ENCODE measurements at regions of chr15 and their contacts with region 1.

Region 1: GRCh38 chr15:88638626-88639372 is at the start of gene ISG20:
- DNase-seq: peak; percentile 83 to 100 (median 99)
- ATAC-seq: peak; percentile 84 to 88 (median 86)
- H3K4me3 ChIP-seq: peak within 1 kb of the TSS; percentile 71 to 73
- H3K4me3 Mint-ChIP-seq: peak within 1 kb of the TSS; percentile 81 to 90 (median 83)
- H3K27ac ChIP-seq: peak within 1 kb of the TSS; percentile 98
- H3K27ac Mint-ChIP-seq: peak within 1 kb of the TSS; percentile 93 to 97
- H3K4me1 ChIP-seq: peaks cover 58 to 91% of the 10 kb centered on the region in 2 experiments
- H3K4me1 Mint-ChIP-seq: peaks cover 80 to 88% (median 81%) of the 10 kb centered on the region in 3 donors
- H3K27me3 ChIP-seq: no peaks in the 10 kb centered on the region
- H3K27me3 Mint-ChIP-seq: no peaks in the 10 kb centered on the region
- total RNA-seq, gene ISG20: 141 to 206 (median 153) TPM

Region 2: DNA sequence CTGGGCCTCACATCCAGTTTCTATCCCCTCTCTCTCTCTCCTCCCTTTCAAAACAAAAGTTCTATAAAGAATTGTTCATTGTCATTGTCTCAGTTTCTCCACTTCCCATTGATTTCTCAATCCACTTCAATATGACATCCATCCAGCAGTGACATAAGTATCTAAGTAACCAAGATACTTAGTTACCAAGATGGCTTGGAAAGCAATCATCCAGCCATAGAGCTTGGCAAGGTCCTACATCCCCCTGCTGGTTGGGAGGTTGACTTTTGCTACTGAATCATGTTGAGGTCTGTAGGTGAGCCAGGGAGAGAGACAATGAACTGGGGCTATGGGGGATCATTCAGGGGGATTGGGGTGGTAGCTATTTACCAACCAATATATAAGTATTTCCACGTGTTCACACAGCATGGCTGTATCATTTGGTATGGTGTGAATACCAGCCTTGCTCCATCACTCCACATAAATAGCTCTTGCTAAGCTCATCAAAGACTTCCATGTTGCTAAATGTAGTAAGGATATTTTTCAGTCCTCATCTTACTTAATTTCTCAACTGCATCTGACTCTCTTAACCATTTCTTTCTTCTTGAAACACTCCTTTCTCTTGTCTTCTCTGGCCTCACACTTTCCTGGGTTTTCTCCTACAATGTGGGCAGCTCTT is 323.4 kb before region 1 on chr15:
- CTCF ChIA-PET with region 1: interaction called in 1 of 2 experiments, 13 read pairs
- POLR2A ChIA-PET with region 1: no interaction called
- DNase-seq: no peak
- ATAC-seq: no peak
- H3K4me3 ChIP-seq: no peak overlapping the region
- H3K4me3 Mint-ChIP-seq: no peak overlapping the region
- H3K27ac ChIP-seq: no peak overlapping the region
- H3K27ac Mint-ChIP-seq: no peak overlapping the region
- H3K4me1 ChIP-seq: no peaks in the 10 kb centered on the region
- H3K4me1 Mint-ChIP-seq: no peaks in the 10 kb centered on the region
- H3K27me3 ChIP-seq: peaks cover 0 to 18% of the 10 kb centered on the region in 2 experiments
- H3K27me3 Mint-ChIP-seq: peaks cover 12 to 27% of the 10 kb centered on the region in 2 donors

Region 3: GRCh38 chr15:88620995-88621772 is 17.6 kb before region 1 on chr15 and contains the start of gene AEN:
- CTCF ChIA-PET with region 1: interaction called, 8 to 30 read pairs
- POLR2A ChIA-PET with region 1: interaction called, 10 to 41 read pairs
- DNase-seq: peak; percentile 86 to 97 (median 92)
- ATAC-seq: peak; percentile 86 to 94 (median 91)
- H3K4me3 ChIP-seq: peak within 1 kb of the TSS; percentile 70 to 76
- H3K4me3 Mint-ChIP-seq: peak within 1 kb of the TSS; percentile 86 to 92 (median 89)
- H3K27ac ChIP-seq: peak within 1 kb of the TSS; percentile 91
- H3K27ac Mint-ChIP-seq: peak within 1 kb of the TSS; percentile 91 to 96
- H3K4me1 ChIP-seq: peaks cover 28 to 54% of the 10 kb centered on the region in 2 experiments
- H3K4me1 Mint-ChIP-seq: peaks cover 47 to 49% (median 48%) of the 10 kb centered on the region in 3 donors
- H3K27me3 ChIP-seq: peaks cover 0 to 4% of the 10 kb centered on the region in 2 experiments
- H3K27me3 Mint-ChIP-seq: peaks cover 3 to 5% of the 10 kb centered on the region in 2 donors
- total RNA-seq, gene AEN: 31.1 to 69.2 (median 51.5) TPM

Region 4: DNA sequence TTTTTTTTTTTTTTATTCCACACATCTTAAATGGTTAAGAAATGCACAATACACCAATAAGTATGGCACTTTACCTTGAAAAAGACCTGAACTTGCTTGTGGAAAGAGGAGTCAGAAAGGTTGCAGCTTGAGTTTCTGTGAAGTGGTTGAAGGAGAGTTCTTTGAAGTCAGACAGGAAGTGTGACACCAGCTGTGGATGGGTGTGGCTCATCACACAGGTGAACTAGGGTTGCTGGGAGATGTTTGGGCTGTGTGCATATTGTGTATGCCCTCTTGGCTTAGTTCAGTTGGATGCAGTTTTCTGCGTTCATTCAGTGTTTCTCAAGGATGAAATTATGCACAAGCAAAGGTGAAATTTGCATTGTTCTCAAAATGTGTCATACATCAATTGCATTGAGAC is 11.3 kb before region 1 on chr15:
- CTCF ChIA-PET with region 1: interaction called, 8 to 30 read pairs
- POLR2A ChIA-PET with region 1: interaction called, 10 to 41 read pairs
- DNase-seq: peak in 34 of 35 experiments; percentile 65 to 94 (median 81)
- ATAC-seq: peak; percentile 82 to 90 (median 84)
- H3K4me3 ChIP-seq: peak overlapping the region in 1 of 2 donors; percentile 7
- H3K4me3 Mint-ChIP-seq: peak overlapping the region; percentile 39 to 92 (median 44)
- H3K27ac ChIP-seq: peak overlapping the region; percentile 91
- H3K27ac Mint-ChIP-seq: peak overlapping the region; percentile 97
- H3K4me1 ChIP-seq: peaks cover 77 to 100% of the 10 kb centered on the region in 2 experiments
- H3K4me1 Mint-ChIP-seq: peaks cover 88 to 98% (median 98%) of the 10 kb centered on the region in 3 donors
- H3K27me3 ChIP-seq: no peaks in the 10 kb centered on the region
- H3K27me3 Mint-ChIP-seq: no peaks in the 10 kb centered on the region

Region 5: DNA sequence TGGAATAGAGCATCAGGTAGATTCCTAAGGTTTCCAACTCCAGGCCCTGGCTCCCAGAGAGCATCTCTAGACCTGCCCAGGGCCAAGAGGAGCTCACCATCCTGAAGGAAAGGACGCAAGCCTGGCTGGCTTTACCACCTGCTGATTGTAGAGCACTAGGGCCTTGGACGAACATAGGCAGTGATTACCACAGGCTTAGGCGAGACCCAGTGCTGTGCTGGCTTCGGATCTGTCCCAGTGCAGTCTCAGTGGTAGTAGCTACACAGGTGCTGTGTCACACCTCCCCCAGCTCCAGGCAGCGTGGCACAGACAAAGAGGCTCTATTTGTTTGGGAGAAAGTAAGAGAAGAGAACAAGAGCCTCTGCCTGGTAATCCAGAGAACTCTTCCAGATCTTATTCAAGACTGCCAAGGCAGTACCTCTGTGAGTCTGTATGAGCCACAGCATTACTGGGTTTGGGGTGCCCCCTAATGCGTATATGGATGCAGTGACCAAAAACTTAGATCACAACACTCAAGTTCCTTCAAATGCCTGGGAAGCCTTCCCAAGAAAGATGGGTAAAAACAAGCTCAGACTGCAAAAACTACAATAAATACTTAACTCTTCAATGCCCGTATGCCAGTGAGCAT is 25.5 kb after region 1 on chr15:
- CTCF ChIA-PET with region 1: interaction called in 1 of 2 experiments, 17 read pairs
- POLR2A ChIA-PET with region 1: interaction called in 1 of 2 experiments, 7 read pairs
- DNase-seq: peak in 34 of 35 experiments; percentile 28 to 79 (median 52)
- ATAC-seq: peak; percentile 63 to 95 (median 94)
- H3K4me3 ChIP-seq: no peak overlapping the region
- H3K4me3 Mint-ChIP-seq: no peak overlapping the region
- H3K27ac ChIP-seq: no peak overlapping the region
- H3K27ac Mint-ChIP-seq: peak overlapping the region; percentile 71 to 81
- H3K4me1 ChIP-seq: peaks cover 0 to 20% of the 10 kb centered on the region in 2 experiments
- H3K4me1 Mint-ChIP-seq: peaks cover 32 to 40% (median 36%) of the 10 kb centered on the region in 3 donors
- H3K27me3 ChIP-seq: no peaks in the 10 kb centered on the region
- H3K27me3 Mint-ChIP-seq: peaks cover 8 to 13% of the 10 kb centered on the region in 2 donors

Region 6: DNA sequence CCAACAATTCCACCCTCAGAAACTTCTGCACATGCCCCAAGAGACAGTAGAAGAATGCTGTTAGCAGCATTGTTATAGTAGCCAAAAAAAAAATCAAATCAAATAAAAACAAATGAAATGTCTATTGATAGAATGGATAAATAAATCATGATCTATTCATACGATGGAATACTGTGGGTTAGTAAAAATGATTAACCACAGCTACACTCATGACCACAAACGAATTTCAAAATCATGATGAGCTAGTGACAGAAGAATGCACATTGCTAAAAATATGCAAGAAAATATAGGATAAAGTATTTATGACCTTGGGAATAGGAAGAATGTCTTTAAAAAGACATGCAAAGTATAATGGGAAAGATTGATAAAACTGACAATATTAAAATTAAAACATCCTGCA is 106.9 kb after region 1 on chr15:
- CTCF ChIA-PET with region 1: no interaction called
- POLR2A ChIA-PET with region 1: interaction called in 1 of 2 experiments, 10 read pairs
- DNase-seq: no peak
- ATAC-seq: no peak
- H3K4me3 ChIP-seq: no peak overlapping the region
- H3K4me3 Mint-ChIP-seq: no peak overlapping the region
- H3K27ac ChIP-seq: no peak overlapping the region
- H3K27ac Mint-ChIP-seq: no peak overlapping the region
- H3K4me1 ChIP-seq: no peaks in the 10 kb centered on the region
- H3K4me1 Mint-ChIP-seq: no peaks in the 10 kb centered on the region
- H3K27me3 ChIP-seq: peaks cover 2 to 17% of the 10 kb centered on the region in 2 experiments
- H3K27me3 Mint-ChIP-seq: peaks cover 33 to 37% of the 10 kb centered on the region in 2 donors

Region 7: DNA sequence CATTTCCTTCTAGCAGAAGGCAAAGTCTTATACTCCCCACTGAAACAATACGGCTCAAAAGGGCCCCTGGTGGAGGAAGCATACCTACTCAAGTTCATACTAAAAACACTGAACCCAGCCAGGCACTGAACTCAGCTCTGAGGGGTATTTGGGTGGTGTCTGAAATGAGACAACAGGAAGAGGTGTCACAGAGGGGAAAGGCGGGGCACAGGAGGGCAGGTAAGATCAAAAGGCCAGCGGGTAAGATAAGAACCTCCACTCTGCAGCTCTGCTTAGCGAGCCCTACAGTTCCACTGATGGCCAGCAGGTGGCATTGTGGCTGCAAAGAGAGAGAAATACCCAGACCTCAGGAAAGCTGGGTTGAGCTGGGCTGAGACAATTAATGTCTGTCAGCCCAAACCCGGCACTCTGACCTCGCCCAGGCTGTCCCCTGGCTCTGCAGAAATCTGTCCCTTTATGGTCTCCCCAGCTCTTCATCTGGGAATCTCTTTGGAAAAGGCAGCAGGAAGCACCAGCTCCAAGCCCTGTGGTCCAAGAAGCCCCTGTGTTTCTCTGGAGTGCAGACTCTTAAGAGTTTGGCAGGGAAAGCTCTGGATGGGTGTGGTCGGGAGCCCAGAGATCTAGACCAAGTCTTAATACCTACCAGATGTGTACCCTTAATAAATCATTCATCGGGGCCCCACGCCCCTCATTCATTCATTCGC is 266.0 kb after region 1 on chr15:
- CTCF ChIA-PET with region 1: interaction called, 3 to 11 read pairs
- POLR2A ChIA-PET with region 1: no interaction called
- DNase-seq: peak; percentile 87 to 98 (median 95)
- ATAC-seq: peak; percentile 98 to 100 (median 98)
- H3K4me3 ChIP-seq: peak overlapping the region in 1 of 2 donors; percentile 35
- H3K4me3 Mint-ChIP-seq: peak overlapping the region in 2 of 3 donors; percentile 47 to 73
- H3K27ac ChIP-seq: peak overlapping the region; percentile 82
- H3K27ac Mint-ChIP-seq: peak overlapping the region; percentile 98 to 99
- H3K4me1 ChIP-seq: peaks cover 18 to 41% of the 10 kb centered on the region in 2 experiments
- H3K4me1 Mint-ChIP-seq: peaks cover 38 to 53% (median 52%) of the 10 kb centered on the region in 3 donors
- H3K27me3 ChIP-seq: no peaks in the 10 kb centered on the region
- H3K27me3 Mint-ChIP-seq: no peaks in the 10 kb centered on the region